ENCODE measurements at regions of chr1 and their contacts with region 1.

Region 1: GRCh38 chr1:26378088-26378878 is 5.7 kb upstream of the ZNF683 start:
- ATAC-seq: peak in 5 of 8 experiments; percentile 22 to 96 (median 94)
- H3K4me3 ChIP-seq: no peak overlapping the region
- H3K27ac ChIP-seq: no peak overlapping the region
- H3K4me1 ChIP-seq: no peaks in the 10 kb centered on the region

Region 2: DNA sequence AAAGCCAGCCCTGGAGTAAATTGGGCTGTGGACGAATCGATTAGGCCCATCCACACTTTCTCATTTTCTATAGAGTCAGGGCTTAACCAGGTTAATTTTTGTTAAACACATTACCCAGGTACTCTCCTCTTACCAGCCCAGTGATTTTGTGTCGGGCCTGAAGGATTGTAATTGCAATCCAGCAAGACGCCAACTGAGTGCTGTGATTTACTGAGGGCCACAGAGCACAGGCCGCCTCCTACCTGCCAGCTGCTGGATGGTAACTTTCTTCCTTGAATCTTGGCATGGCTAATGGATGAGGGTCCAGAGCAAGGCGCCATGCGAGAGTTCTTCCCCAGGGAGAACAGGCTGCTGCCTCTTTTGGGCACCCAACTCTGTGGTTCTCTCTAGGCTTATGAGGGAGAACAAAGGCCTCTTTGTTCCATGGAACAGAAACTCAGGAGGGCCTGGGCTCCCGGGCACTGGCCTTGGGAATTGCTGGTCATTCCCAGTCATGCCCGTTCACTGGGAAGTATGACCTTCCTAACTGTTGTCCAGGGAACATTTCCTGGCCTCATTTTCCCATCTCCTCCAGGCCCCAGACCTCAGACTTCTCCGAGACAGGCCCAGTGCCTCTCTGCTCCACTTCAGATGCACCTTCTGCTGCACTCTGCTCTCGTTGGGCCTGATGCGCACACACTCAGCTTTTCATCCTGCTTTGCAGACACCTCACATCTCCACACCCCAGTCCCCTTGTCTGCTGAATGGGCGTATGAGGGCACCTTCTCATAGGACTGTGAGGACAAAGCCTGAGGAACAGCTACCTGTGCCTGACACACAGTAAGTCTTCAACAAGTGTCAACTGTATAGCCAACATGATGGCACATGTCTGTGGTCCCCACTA is 1203.3 kb before region 1 on chr1:
- in situ Hi-C with region 1: no loop called
- ATAC-seq: no peak
- H3K4me3 ChIP-seq: no peak overlapping the region
- H3K27ac ChIP-seq: no peak overlapping the region
- H3K4me1 ChIP-seq: no peaks in the 10 kb centered on the region

Region 3: GRCh38 chr1:26145041-26145959 is 233.0 kb before region 1 on chr1:
- in situ Hi-C with region 1: no loop called
- ATAC-seq: peak; percentile 88 to 100 (median 94)
- H3K4me3 ChIP-seq: no peak overlapping the region
- H3K27ac ChIP-seq: no peak overlapping the region
- H3K4me1 ChIP-seq: peaks cover 0 to 2% of the 10 kb centered on the region in 2 donors

Region 4: GRCh38 chr1:26190373-26190987 is 187.8 kb before region 1 on chr1 and contains the start of gene CATSPER4:
- in situ Hi-C with region 1: no loop called
- ATAC-seq: peak; percentile 48 to 83 (median 56)
- H3K4me3 ChIP-seq: no peak within 1 kb of the TSS
- H3K27ac ChIP-seq: peak within 1 kb of the TSS in 1 of 2 donors; percentile 53
- H3K4me1 ChIP-seq: peaks cover 0 to 4% of the 10 kb centered on the region in 2 donors
- total RNA-seq, gene CATSPER4: 0.08 to 0.52 TPM in 2 of 8 experiments, not detected in the others

Region 5: GRCh38 chr1:26279456-26280332 is 98.6 kb before region 1 on chr1 and contains the start of gene SH3BGRL3:
- in situ Hi-C with region 1: loop called in 1 of 9 experiments (anchors 25 kb)
- ATAC-seq: peak; percentile 49 to 86 (median 80)
- H3K4me3 ChIP-seq: peak within 1 kb of the TSS; percentile 48 to 92 (median 52)
- H3K27ac ChIP-seq: peak within 1 kb of the TSS; percentile 58 to 66
- H3K4me1 ChIP-seq: peaks cover 28 to 35% of the 10 kb centered on the region in 2 donors
- total RNA-seq, gene SH3BGRL3: 34.1 to 125 (median 45.5) TPM

Region 6: GRCh38 chr1:26477446-26478152 is 99.3 kb after region 1 on chr1:
- in situ Hi-C with region 1: no loop called
- ATAC-seq: no peak
- H3K4me3 ChIP-seq: no peak overlapping the region
- H3K27ac ChIP-seq: no peak overlapping the region
- H3K4me1 ChIP-seq: peaks cover 11 to 13% of the 10 kb centered on the region in 2 donors